Activated CD4-positive, alpha-beta T cell treated with anti-CD3 and anti-CD28 coated beads, Interleukin-2, amount 10 ng/mL, durations not matched to agents 7 days and 5 days (primary cell): ENCODE measurements at regions of chr14 and their contacts with region 1.

Region 1: GRCh38 chr14:20384886-20385285 is 28.4 kb downstream of the TEP1 start:
- DNase-seq: no peak
- H3K4me3 Mint-ChIP-seq: no peak overlapping the region
- H3K27ac Mint-ChIP-seq: no peak overlapping the region
- H3K4me1 Mint-ChIP-seq: no peaks in the 10 kb centered on the region
- H3K27me3 Mint-ChIP-seq: no peaks in the 10 kb centered on the region

Region 2: GRCh38 chr14:20372796-20373195 is 12.1 kb before region 1 on chr14:
- CTCF ChIA-PET with region 1: interaction called, 11 read pairs
- POLR2A ChIA-PET with region 1: no interaction called
- DNase-seq: no peak
- H3K4me3 Mint-ChIP-seq: no peak overlapping the region
- H3K27ac Mint-ChIP-seq: no peak overlapping the region
- H3K4me1 Mint-ChIP-seq: peaks cover 6% of the 10 kb centered on the region
- H3K27me3 Mint-ChIP-seq: no peaks in the 10 kb centered on the region

Region 3: GRCh38 chr14:20434701-20435581 is 50.1 kb after region 1 on chr14:
- CTCF ChIA-PET with region 1: no interaction called
- POLR2A ChIA-PET with region 1: no interaction called
- DNase-seq: no peak
- H3K4me3 Mint-ChIP-seq: no peak overlapping the region
- H3K27ac Mint-ChIP-seq: no peak overlapping the region
- H3K4me1 Mint-ChIP-seq: peaks cover 2% of the 10 kb centered on the region
- H3K27me3 Mint-ChIP-seq: peaks cover 3% of the 10 kb centered on the region